Activated CD8-positive, alpha-beta memory T cell treated with anti-CD3 and anti-CD28 coated beads, Interleukin-2, amount 10 ng/mL, durations not matched to agents 7 days and 5 days (primary cell): ENCODE measurements at regions of chr1 and their contacts with region 1.

Region 1: GRCh38 chr1:28877132-28877781 is 37.1 kb upstream of the EPB41 start:
- DNase-seq: peak; percentile 82
- ATAC-seq: peak; percentile 84
- H3K4me3 Mint-ChIP-seq: no peak overlapping the region
- H3K27ac Mint-ChIP-seq: no peak overlapping the region
- H3K4me1 Mint-ChIP-seq: peaks cover 11% of the 10 kb centered on the region
- H3K27me3 Mint-ChIP-seq: peaks cover 8% of the 10 kb centered on the region

Region 2: GRCh38 chr1:28409090-28409489 is 468.2 kb before region 1 on chr1:
- CTCF ChIA-PET with region 1: interaction called, 10 read pairs
- DNase-seq: no peak
- ATAC-seq: no peak
- H3K4me3 Mint-ChIP-seq: no peak overlapping the region
- H3K27ac Mint-ChIP-seq: no peak overlapping the region
- H3K4me1 Mint-ChIP-seq: peaks cover 5% of the 10 kb centered on the region
- H3K27me3 Mint-ChIP-seq: no peaks in the 10 kb centered on the region

Region 3: DNA sequence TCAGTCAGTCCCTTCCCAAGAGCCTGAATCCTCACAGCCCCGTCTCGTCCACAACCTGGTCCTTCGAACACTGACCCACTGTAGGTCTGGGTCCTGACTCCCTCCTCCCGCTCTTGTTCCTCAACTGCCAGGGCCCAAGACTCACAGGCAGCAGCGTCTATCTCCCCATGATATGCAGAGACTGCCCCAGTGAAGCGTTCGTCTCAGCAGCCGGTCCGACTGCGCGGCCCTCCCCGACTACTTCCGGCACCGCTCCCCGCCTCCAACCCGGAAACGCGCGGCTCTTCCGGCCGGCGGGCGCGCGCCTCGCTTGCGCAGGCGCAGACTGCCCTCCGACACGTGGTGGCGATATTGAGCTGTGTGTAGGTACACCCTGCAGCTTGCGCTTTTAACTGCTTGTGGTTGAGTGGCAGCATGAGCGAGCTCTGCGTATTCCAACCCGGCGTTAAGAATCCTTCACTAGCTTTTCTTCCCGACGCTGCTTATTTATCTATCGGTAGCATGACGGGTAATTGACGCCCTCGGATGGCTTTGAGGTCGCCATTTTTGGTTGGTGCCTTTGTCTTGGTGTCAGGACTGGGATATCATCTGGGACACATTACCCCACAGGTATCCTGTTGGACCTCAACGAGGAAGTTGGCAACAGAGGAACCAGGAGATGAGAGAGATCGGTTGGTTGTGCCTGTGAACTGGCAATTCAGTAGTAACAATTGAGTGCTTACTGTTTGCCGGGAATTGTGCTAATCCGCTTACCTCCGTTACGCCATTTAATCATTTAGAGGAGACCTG is 234.2 kb before region 1 on chr1 and contains the start of gene TAF12:
- CTCF ChIA-PET with region 1: interaction called, 23 read pairs
- DNase-seq: peak; percentile 95
- ATAC-seq: peak; percentile 89
- H3K4me3 Mint-ChIP-seq: peak within 1 kb of the TSS; percentile 97
- H3K27ac Mint-ChIP-seq: peak within 1 kb of the TSS; percentile 94
- H3K4me1 Mint-ChIP-seq: peaks cover 49% of the 10 kb centered on the region
- H3K27me3 Mint-ChIP-seq: no peaks in the 10 kb centered on the region
- total RNA-seq, gene TAF12: 30.4 to 33.0 TPM

Region 4: DNA sequence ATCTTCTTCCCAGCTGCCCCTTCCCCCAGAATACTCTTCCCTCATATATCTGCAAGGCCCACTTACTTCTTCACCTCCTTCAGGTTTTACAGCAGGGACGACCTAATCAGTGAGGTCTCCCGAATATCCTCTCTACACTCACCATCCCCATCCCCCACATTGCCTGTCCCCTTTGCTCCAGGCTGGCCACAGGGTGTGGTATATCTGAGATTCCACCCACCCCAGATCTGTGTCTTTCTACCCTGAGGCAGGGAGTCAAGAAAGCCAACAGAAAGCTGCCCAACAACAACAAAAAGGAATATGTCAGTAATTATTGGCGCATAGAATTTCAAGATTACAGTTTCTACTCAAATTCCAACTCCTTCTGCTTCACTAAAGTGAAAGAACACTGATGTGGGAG is 95.2 kb before region 1 on chr1:
- CTCF ChIA-PET with region 1: interaction called, 161 read pairs
- DNase-seq: no peak
- ATAC-seq: no peak
- H3K4me3 Mint-ChIP-seq: no peak overlapping the region
- H3K27ac Mint-ChIP-seq: no peak overlapping the region
- H3K4me1 Mint-ChIP-seq: peaks cover 8% of the 10 kb centered on the region
- H3K27me3 Mint-ChIP-seq: peaks cover 7% of the 10 kb centered on the region

Region 5: GRCh38 chr1:28865997-28866650 is 11.1 kb before region 1 on chr1:
- CTCF ChIA-PET with region 1: interaction called, 25 read pairs
- DNase-seq: no peak
- ATAC-seq: no peak
- H3K4me3 Mint-ChIP-seq: no peak overlapping the region
- H3K27ac Mint-ChIP-seq: no peak overlapping the region
- H3K4me1 Mint-ChIP-seq: no peaks in the 10 kb centered on the region
- H3K27me3 Mint-ChIP-seq: peaks cover 14% of the 10 kb centered on the region

Region 6: GRCh38 chr1:28965271-28965870 is 88.1 kb after region 1 on chr1:
- CTCF ChIA-PET with region 1: no interaction called
- DNase-seq: no peak
- ATAC-seq: no peak
- H3K4me3 Mint-ChIP-seq: no peak overlapping the region
- H3K27ac Mint-ChIP-seq: no peak overlapping the region
- H3K4me1 Mint-ChIP-seq: peaks cover 25% of the 10 kb centered on the region
- H3K27me3 Mint-ChIP-seq: peaks cover 3% of the 10 kb centered on the region

Region 7: GRCh38 chr1:29113413-29114117 is 236.3 kb after region 1 on chr1:
- CTCF ChIA-PET with region 1: interaction called, 12 read pairs
- DNase-seq: no peak
- ATAC-seq: peak; percentile 57
- H3K4me3 Mint-ChIP-seq: no peak overlapping the region
- H3K27ac Mint-ChIP-seq: no peak overlapping the region
- H3K4me1 Mint-ChIP-seq: peaks cover 10% of the 10 kb centered on the region
- H3K27me3 Mint-ChIP-seq: no peaks in the 10 kb centered on the region